ENCODE measurements at regions of chr1 and their contacts with region 1.

Region 1: GRCh38 chr1:61741711-61742619 is at the start of gene PATJ:
- DNase-seq: peak; percentile 77
- ATAC-seq: peak; percentile 87
- H3K4me3 Mint-ChIP-seq: peak within 1 kb of the TSS; percentile 96
- H3K27ac Mint-ChIP-seq: peak within 1 kb of the TSS; percentile 94
- H3K4me1 Mint-ChIP-seq: peaks cover 13% of the 10 kb centered on the region
- H3K27me3 Mint-ChIP-seq: no peaks in the 10 kb centered on the region
- total RNA-seq, gene PATJ: 24.5 to 27.2 TPM

Region 2: DNA sequence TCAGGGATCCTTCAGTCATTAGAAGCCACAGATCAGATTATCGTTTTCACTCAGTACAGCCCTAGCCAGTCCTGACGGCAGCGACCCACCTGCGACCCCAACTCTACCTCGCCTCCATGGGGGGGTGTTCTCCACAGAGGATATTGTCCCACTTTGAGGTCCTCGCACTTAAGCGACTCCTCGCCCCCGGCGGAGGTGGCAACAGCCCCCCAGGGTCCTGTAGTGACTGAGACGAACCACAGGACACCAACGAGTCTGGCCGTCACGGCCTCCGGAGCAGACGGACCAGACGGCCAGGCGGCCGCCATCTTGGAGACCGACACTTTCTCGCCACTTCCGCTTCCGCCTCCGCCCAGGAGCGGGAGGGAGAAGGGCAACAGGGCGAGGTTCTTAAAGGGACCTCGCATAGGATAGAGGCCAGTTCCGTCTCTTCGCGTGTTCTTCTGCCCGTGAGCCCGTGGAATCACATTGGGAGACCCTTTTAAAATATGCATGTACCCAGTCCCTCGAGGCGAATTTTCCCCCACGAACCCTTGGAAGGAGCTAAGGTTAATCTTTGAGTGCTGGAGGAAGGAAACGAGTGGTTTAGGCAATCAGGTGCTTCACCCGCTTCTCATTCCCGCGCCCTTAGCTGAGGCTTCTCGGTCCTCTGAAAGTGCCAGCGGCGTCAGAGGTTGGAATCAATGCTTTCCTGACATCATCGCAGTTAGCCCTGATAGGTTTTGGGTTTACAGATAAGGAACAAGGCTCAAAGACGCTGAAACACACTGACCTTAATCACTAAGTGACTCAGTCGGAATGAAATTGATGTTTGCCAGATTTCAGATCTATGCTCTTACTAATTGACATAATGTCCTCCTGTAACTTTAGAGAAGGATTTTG is 16.9 kb before region 1 on chr1 and contains the start of gene TM2D1:
- POLR2A ChIA-PET with region 1: interaction called, 14 read pairs
- DNase-seq: peak; percentile 91
- ATAC-seq: peak; percentile 94
- H3K4me3 Mint-ChIP-seq: peak within 1 kb of the TSS; percentile 91
- H3K27ac Mint-ChIP-seq: peak within 1 kb of the TSS; percentile 96
- H3K4me1 Mint-ChIP-seq: peaks cover 16% of the 10 kb centered on the region
- H3K27me3 Mint-ChIP-seq: no peaks in the 10 kb centered on the region
- total RNA-seq, gene TM2D1: 37.7 to 43.8 TPM

Measured in activated naive CD8-positive, alpha-beta T cell treated with anti-CD3 and anti-CD28 coated beads, Interleukin-2, amount 10 ng/mL, durations not matched to agents 7 days and 5 days (primary cell).